MCF 10A (cell line): ENCODE measurements at regions of chr1 and their contacts with region 1.

Region 1: GRCh38 chr1:232596666-232597303 is 33.1 kb downstream of the SIPA1L2 start:
- DNase-seq: no peak
- H3K4me3 Mint-ChIP-seq: no peak overlapping the region
- H3K27ac Mint-ChIP-seq: no peak overlapping the region
- H3K4me1 Mint-ChIP-seq: peaks cover 19% of the 10 kb centered on the region
- H3K27me3 Mint-ChIP-seq: no peaks in the 10 kb centered on the region
- CTCF ChIP-seq: no peak

Region 2: DNA sequence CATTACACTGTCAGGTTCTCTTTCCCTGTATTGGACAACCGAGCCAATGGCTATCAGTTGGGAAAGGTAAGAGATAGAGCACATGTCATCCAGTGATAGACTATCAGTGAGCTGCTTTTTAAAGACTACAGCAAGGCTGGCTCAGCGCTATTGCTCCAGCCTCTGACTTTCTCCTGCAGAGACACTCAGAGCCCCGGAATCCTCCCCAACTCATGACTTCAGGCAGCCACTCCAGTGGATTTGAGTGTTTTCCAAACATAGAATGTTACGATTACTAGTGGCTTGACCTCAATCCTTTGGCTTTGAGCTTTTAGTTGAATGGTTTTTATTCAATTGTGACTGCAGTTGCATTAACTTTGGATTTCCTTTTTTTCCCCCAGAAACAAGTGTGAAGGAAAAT is 638.3 kb before region 1 on chr1:
- CTCF ChIA-PET with region 1: no interaction called
- POLR2A ChIA-PET with region 1: no interaction called
- intact Hi-C with region 1: no loop called
- DNase-seq: no peak
- H3K4me3 Mint-ChIP-seq: no peak overlapping the region
- H3K27ac Mint-ChIP-seq: no peak overlapping the region
- H3K4me1 Mint-ChIP-seq: no peaks in the 10 kb centered on the region
- H3K27me3 Mint-ChIP-seq: peaks cover 9% of the 10 kb centered on the region
- CTCF ChIP-seq: no peak

Region 3: GRCh38 chr1:232608427-232608826 is 11.6 kb after region 1 on chr1:
- CTCF ChIA-PET with region 1: interaction called, 5 read pairs
- POLR2A ChIA-PET with region 1: interaction called, 11 read pairs
- intact Hi-C with region 1: no loop called
- DNase-seq: no peak
- H3K4me3 Mint-ChIP-seq: no peak overlapping the region
- H3K27ac Mint-ChIP-seq: no peak overlapping the region
- H3K4me1 Mint-ChIP-seq: peaks cover 12% of the 10 kb centered on the region
- H3K27me3 Mint-ChIP-seq: no peaks in the 10 kb centered on the region
- CTCF ChIP-seq: no peak

Region 4: DNA sequence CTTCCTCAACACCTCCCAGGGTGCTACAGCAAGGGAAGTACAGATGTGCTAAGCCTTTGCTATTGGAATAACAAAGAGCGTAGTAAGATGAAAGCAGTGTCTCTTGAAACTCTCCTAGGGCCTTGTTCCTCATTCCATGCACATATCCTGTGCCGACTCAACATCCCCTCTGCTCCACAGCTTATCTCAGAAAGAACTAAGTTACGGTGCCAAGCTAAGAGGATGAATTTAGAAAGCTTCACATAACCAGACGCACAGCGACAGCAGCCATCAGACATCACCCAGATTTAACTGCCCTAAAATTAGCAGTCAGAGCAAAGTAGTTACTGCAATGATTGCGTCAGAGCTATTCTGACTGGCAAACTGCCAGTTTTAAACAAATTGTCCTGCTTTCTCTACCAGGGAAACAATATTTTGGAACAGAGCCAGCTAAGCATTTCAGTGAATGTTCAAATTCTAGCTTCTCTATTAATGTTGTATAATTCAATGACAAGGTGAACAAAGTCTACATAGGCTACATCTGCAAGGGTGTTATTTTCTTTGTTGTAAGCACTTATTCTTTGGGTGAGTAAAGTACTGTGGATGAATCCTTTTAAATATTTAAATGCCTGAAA is 23.7 kb after region 1 on chr1:
- CTCF ChIA-PET with region 1: interaction called, 5 read pairs
- POLR2A ChIA-PET with region 1: interaction called, 12 read pairs
- intact Hi-C with region 1: no loop called
- DNase-seq: peak; percentile 98
- H3K4me3 Mint-ChIP-seq: peak overlapping the region; percentile 10
- H3K27ac Mint-ChIP-seq: peak overlapping the region; percentile 17
- H3K4me1 Mint-ChIP-seq: peaks cover 34% of the 10 kb centered on the region
- H3K27me3 Mint-ChIP-seq: no peaks in the 10 kb centered on the region
- CTCF ChIP-seq: no peak